ENCODE measurements at regions of chr22 and their contacts with region 1.

Region 1: DNA sequence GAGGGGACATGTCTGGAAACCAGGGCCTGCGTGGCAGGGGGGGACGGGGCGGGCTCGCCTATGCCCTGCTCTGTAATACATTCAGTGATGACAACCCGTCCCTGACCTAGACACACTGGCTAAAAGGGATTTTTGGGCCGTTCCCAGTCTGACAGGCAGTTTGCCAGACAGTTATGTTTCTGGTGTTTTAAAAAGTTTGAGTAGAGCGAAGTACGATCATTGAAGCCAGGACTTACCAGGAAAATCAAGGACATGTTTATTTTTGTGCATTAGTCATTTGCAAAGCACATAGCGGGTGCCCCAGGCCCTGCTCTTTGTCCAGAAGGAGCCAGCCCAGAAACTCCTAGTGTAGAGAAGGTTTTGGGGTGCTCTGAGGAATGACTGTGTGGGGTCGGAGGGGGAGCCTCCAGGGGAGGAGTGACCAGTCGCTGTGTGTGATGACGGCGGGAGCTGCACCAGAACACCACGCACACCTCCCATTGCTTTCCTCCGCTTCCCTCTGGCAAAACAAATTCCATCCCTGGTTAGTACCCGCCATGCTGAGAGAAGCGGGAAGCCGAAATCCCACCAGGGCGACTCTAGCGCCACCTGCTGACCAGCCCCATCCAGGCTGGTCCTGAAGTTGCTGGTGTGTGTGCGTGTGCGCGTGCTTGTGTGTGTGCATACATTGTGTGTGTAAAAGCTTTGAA is 50.8 kb downstream of the FBLN1 start:
- DNase-seq: no peak
- H3K4me3 ChIP-seq: no peak overlapping the region
- H3K27ac ChIP-seq: peak overlapping the region; percentile 93
- H3K4me1 ChIP-seq: peaks cover 61% of the 10 kb centered on the region
- H3K27me3 ChIP-seq: no peaks in the 10 kb centered on the region
- CTCF ChIP-seq: peak; percentile 83 to 95 (median 87)
- POLR2A ChIP-seq: no peak

Region 2: GRCh38 chr22:45268958-45269844 is 284.3 kb before region 1 on chr22:
- intact Hi-C with region 1: loop called (anchors 5 kb)
- DNase-seq: no peak
- H3K4me3 ChIP-seq: peak overlapping the region; percentile 64 to 66
- H3K27ac ChIP-seq: peak overlapping the region; percentile 76
- H3K4me1 ChIP-seq: peaks cover 24% of the 10 kb centered on the region
- H3K27me3 ChIP-seq: no peaks in the 10 kb centered on the region
- CTCF ChIP-seq: peak; percentile 83 to 95 (median 92)
- POLR2A ChIP-seq: no peak

Region 3: GRCh38 chr22:45284705-45285262 is 268.7 kb before region 1 on chr22 and contains the start of gene UPK3A:
- intact Hi-C with region 1: no loop called
- DNase-seq: no peak
- H3K4me3 ChIP-seq: peak within 1 kb of the TSS in 1 of 2 donors; percentile 41
- H3K27ac ChIP-seq: no peak within 1 kb of the TSS
- H3K4me1 ChIP-seq: peaks cover 22% of the 10 kb centered on the region
- H3K27me3 ChIP-seq: no peaks in the 10 kb centered on the region
- CTCF ChIP-seq: no peak
- POLR2A ChIP-seq: no peak
- total RNA-seq, gene UPK3A: not detected

Region 4: DNA sequence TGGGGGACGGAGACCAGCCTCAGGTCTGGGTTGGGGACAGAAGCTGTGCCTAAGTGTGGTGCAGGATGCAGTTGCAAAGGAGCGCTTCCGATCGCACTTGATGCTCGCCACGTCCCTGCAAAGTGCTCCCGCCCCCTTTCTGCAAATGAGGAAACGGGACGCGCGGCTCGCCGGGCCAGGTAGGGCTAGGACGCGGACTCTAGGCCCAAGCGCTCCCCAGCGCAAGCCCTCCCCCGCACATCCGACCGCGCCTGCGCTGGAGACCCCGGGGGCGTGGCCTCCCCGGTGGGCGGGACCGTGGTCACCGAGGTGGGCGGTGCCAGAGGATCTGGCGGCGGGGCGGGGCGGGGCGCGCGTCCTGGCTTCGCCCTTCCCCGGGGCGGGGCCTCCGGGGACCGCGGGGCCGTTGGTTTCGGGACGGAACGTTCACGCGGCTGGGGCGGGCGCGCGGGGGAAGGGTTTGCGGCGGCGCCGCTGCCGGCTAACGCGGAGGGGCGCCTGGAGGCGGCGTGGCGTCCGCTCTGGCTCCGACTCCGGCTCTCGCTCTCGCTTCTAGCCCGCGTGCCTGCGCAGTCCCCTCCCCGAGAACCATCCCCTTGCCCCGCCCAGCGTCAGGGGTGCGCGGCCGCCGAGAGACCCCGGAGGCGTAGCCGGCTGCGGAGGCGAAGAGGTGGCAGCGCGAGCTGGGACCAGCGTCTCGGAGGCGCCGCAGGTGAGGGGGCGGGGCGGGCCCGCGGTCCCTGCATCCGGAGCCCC is 243.8 kb before region 1 on chr22 and contains the start of gene FAM118A:
- intact Hi-C with region 1: loop called (anchors 10 kb)
- DNase-seq: no peak
- H3K4me3 ChIP-seq: peak within 1 kb of the TSS; percentile 95 to 98
- H3K27ac ChIP-seq: peak within 1 kb of the TSS; percentile 92
- H3K4me1 ChIP-seq: peaks cover 20% of the 10 kb centered on the region
- H3K27me3 ChIP-seq: no peaks in the 10 kb centered on the region
- CTCF ChIP-seq: peak in 1 of 3 experiments; percentile 19
- POLR2A ChIP-seq: peak in 1 of 2 donors; percentile 63
- total RNA-seq, gene FAM118A: 49.6 TPM

Region 5: GRCh38 chr22:45441138-45441537 is 112.4 kb before region 1 on chr22:
- intact Hi-C with region 1: loop called (anchors 2 kb)
- DNase-seq: no peak
- H3K4me3 ChIP-seq: no peak overlapping the region
- H3K27ac ChIP-seq: peak overlapping the region; percentile 61
- H3K4me1 ChIP-seq: peaks cover 21% of the 10 kb centered on the region
- H3K27me3 ChIP-seq: no peaks in the 10 kb centered on the region
- CTCF ChIP-seq: peak in 2 of 3 experiments; percentile 32 to 70
- POLR2A ChIP-seq: no peak

Region 6: GRCh38 chr22:45502215-45503049 is 51.1 kb before region 1 on chr22 and contains the start of gene FBLN1:
- intact Hi-C with region 1: loop called (anchors 5 kb)
- DNase-seq: no peak
- H3K4me3 ChIP-seq: peak within 1 kb of the TSS; percentile 75 to 82
- H3K27ac ChIP-seq: peak within 1 kb of the TSS; percentile 92
- H3K4me1 ChIP-seq: peaks cover 66% of the 10 kb centered on the region
- H3K27me3 ChIP-seq: no peaks in the 10 kb centered on the region
- CTCF ChIP-seq: peak in 2 of 3 experiments; percentile 15 to 51
- POLR2A ChIP-seq: peak in 1 of 2 donors; percentile 66
- total RNA-seq, gene FBLN1: 1,019 TPM

Region 7: DNA sequence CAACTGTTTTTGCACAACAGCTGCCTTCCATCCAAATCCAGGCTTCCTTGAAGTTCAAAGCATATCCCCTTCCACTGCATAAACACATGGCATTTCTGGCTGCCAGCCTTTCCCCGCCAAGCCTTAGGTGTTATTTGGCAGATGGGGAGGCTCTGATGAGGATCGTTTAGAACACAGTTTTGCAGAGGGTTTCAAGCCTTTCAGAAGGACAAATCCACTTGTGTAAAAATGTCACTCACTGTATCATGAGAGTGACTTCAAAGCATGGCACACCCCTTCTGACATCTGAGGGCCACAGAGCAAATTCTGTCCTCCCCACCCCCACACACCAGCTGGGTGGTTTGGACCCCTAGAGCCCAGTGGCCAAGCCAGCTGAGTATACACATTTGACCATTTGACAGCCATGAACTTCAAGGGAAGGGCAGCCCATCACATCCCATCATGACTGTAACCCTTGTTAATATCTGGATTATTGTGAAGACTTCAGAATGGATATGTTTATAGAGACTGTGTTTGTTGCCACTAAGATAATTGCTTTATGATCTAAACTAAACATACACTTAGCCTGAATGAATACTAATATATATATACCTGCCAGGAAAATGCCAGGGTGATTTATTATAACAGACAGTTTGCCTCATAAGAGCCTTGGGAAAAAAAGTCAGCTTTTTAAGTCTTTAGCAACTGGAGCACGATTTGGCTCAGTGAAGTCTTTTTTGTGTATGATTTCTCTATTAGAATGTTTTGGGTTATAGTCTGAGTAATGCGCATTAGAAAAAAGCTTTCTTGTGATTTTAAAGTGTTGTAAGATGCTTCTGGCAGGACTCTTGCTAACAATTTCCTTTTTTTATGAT is 18.9 kb before region 1 on chr22:
- intact Hi-C with region 1: no loop called
- DNase-seq: no peak
- H3K4me3 ChIP-seq: no peak overlapping the region
- H3K27ac ChIP-seq: peak overlapping the region; percentile 92
- H3K4me1 ChIP-seq: peaks cover 77% of the 10 kb centered on the region
- H3K27me3 ChIP-seq: no peaks in the 10 kb centered on the region
- CTCF ChIP-seq: no peak
- POLR2A ChIP-seq: no peak

Measured in vagina (tissue), 2 donors.